ENCODE measurements at regions of chr4 and their contacts with region 1.

Region 1: GRCh38 chr4:10622728-10623127 is 61.8 kb downstream of the CLNK start:
- DNase-seq: no peak
- H3K4me3 Mint-ChIP-seq: no peak overlapping the region
- H3K27ac Mint-ChIP-seq: no peak overlapping the region
- H3K4me1 Mint-ChIP-seq: peaks cover 22% of the 10 kb centered on the region
- H3K27me3 Mint-ChIP-seq: no peaks in the 10 kb centered on the region

Region 2: GRCh38 chr4:10589799-10590198 is 32.9 kb before region 1 on chr4:
- intact Hi-C with region 1: loop called (anchors 5 kb)
- DNase-seq: no peak
- H3K4me3 Mint-ChIP-seq: no peak overlapping the region
- H3K27ac Mint-ChIP-seq: no peak overlapping the region
- H3K4me1 Mint-ChIP-seq: peaks cover 32% of the 10 kb centered on the region
- H3K27me3 Mint-ChIP-seq: no peaks in the 10 kb centered on the region

Region 3: GRCh38 chr4:10655986-10656385 is 33.3 kb after region 1 on chr4:
- intact Hi-C with region 1: loop called (anchors 2 kb)
- DNase-seq: no peak
- H3K4me3 Mint-ChIP-seq: peak overlapping the region; percentile 55
- H3K27ac Mint-ChIP-seq: peak overlapping the region; percentile 90
- H3K4me1 Mint-ChIP-seq: peaks cover 42% of the 10 kb centered on the region
- H3K27me3 Mint-ChIP-seq: no peaks in the 10 kb centered on the region

Region 4: GRCh38 chr4:11218692-11219091 is 596.0 kb after region 1 on chr4:
- intact Hi-C with region 1: no loop called
- DNase-seq: no peak
- H3K4me3 Mint-ChIP-seq: no peak overlapping the region
- H3K27ac Mint-ChIP-seq: no peak overlapping the region
- H3K4me1 Mint-ChIP-seq: no peaks in the 10 kb centered on the region
- H3K27me3 Mint-ChIP-seq: no peaks in the 10 kb centered on the region

Measured in activated T-helper 2 cell treated with anti-CD3 and anti-CD28 coated beads, Interferon-gamma antibody, Interleukin-2, Interleukin-4, amounts not matched to agents 10 μg/mL and 5 μg/mL and 100 μg/mL, durations not matched to agents 14 hours and 24 hours and 36 hours (primary cell).